ENCODE measurements at regions of chr9 and their contacts with region 1.

Region 1: GRCh38 chr9:37174247-37174646 is 53.9 kb downstream of the ZCCHC7 start:
- DNase-seq: no peak
- ATAC-seq: no peak
- H3K4me3 Mint-ChIP-seq: no peak overlapping the region
- H3K27ac Mint-ChIP-seq: peak overlapping the region; percentile 9
- H3K4me1 Mint-ChIP-seq: peaks cover 42% of the 10 kb centered on the region
- H3K27me3 Mint-ChIP-seq: no peaks in the 10 kb centered on the region
- CTCF ChIP-seq: no peak

Region 2: GRCh38 chr9:37187713-37188439 is 13.6 kb after region 1 on chr9:
- CTCF ChIA-PET with region 1: no interaction called
- POLR2A ChIA-PET with region 1: no interaction called
- intact Hi-C with region 1: loop called (anchors 2 kb)
- DNase-seq: no peak
- ATAC-seq: peak; percentile 80
- H3K4me3 Mint-ChIP-seq: peak overlapping the region; percentile 83
- H3K27ac Mint-ChIP-seq: peak overlapping the region; percentile 97
- H3K4me1 Mint-ChIP-seq: peaks cover 80% of the 10 kb centered on the region
- H3K27me3 Mint-ChIP-seq: no peaks in the 10 kb centered on the region
- CTCF ChIP-seq: no peak